ENCODE measurements at regions of chr11 and their contacts with region 1.

Region 1: GRCh38 chr11:110092515-110093404 is at the start of gene ZC3H12C:
- DNase-seq: peak; percentile 89
- H3K4me3 ChIP-seq: peak within 1 kb of the TSS; percentile 82
- H3K27ac ChIP-seq: peak within 1 kb of the TSS; percentile 77
- H3K4me1 ChIP-seq: peaks cover 53% of the 10 kb centered on the region
- H3K27me3 ChIP-seq: no peaks in the 10 kb centered on the region
- CTCF ChIP-seq: peak; percentile 24; the same call in 1 of the 2 replicates
- total RNA-seq, gene ZC3H12C: 9.3 and 12.4 TPM in 2 replicates

Region 2: DNA sequence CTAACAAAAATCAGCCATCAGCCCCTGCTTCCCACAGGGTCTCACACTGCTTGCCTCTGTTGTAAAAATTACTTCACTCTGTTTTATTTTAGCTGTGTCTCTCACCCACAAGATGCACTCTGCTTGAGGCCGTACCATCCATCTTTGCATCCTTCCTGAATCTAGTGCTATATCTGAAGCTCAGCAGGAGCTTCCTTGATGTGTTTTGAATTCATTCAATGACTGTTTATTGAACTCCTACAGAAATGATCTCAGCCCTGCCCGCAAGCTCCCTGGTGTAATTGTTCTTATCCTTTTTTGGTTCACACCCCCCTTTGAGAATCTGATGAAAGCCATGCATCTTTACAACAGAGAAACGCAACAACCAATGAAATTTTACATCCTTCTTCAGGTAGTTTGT is 309.7 kb before region 1 on chr11:
- CTCF ChIA-PET with region 1: no interaction called
- POLR2A ChIA-PET with region 1: no interaction called
- intact Hi-C with region 1: no loop called
- DNase-seq: no peak
- H3K4me3 ChIP-seq: no peak overlapping the region
- H3K27ac ChIP-seq: no peak overlapping the region
- H3K4me1 ChIP-seq: no peaks in the 10 kb centered on the region
- H3K27me3 ChIP-seq: no peaks in the 10 kb centered on the region
- CTCF ChIP-seq: no peak

Region 3: DNA sequence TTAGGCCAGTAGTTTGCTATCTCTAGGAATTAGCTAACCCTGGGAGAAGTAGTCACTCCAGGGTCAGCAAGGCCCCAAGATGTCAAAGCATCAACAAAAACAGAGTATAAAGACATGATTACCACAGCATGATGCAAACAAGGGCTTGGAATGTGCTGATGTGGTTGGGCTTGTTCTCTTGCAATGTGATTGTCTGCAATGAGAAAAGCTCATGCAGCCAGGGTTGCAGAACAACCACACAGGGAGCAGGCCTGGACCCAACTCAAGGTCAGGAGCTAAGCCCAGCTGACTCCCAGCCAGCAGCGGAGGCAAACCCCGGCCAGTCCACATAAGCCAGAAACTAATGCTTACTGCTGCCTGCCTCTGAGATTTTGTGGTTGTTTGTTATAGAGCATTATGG is 131.9 kb before region 1 on chr11:
- CTCF ChIA-PET with region 1: no interaction called
- POLR2A ChIA-PET with region 1: no interaction called
- intact Hi-C with region 1: no loop called
- DNase-seq: no peak
- H3K4me3 ChIP-seq: no peak overlapping the region
- H3K27ac ChIP-seq: no peak overlapping the region
- H3K4me1 ChIP-seq: no peaks in the 10 kb centered on the region
- H3K27me3 ChIP-seq: no peaks in the 10 kb centered on the region
- CTCF ChIP-seq: no peak

Region 4: GRCh38 chr11:110362971-110363509 is 270.3 kb after region 1 on chr11:
- CTCF ChIA-PET with region 1: no interaction called
- POLR2A ChIA-PET with region 1: no interaction called
- intact Hi-C with region 1: loop called (anchors 5 kb)
- DNase-seq: peak; percentile 47 to 73
- H3K4me3 ChIP-seq: peak overlapping the region; percentile 30; the same call in 1 of the 2 replicates
- H3K27ac ChIP-seq: peak overlapping the region; percentile 72
- H3K4me1 ChIP-seq: peaks cover 46% of the 10 kb centered on the region
- H3K27me3 ChIP-seq: no peaks in the 10 kb centered on the region
- CTCF ChIP-seq: no peak

Region 5: GRCh38 chr11:111438846-111439520 is 1346.2 kb after region 1 on chr11:
- CTCF ChIA-PET with region 1: no interaction called
- POLR2A ChIA-PET with region 1: no interaction called
- intact Hi-C with region 1: loop called (anchors 5 kb)
- DNase-seq: no peak
- H3K4me3 ChIP-seq: no peak overlapping the region
- H3K27ac ChIP-seq: no peak overlapping the region
- H3K4me1 ChIP-seq: peaks cover 9% of the 10 kb centered on the region
- H3K27me3 ChIP-seq: no peaks in the 10 kb centered on the region
- CTCF ChIP-seq: no peak